Lower leg skin (tissue), 4 donors: ENCODE measurements at regions of chr17 and their contacts with region 1.

Region 1: DNA sequence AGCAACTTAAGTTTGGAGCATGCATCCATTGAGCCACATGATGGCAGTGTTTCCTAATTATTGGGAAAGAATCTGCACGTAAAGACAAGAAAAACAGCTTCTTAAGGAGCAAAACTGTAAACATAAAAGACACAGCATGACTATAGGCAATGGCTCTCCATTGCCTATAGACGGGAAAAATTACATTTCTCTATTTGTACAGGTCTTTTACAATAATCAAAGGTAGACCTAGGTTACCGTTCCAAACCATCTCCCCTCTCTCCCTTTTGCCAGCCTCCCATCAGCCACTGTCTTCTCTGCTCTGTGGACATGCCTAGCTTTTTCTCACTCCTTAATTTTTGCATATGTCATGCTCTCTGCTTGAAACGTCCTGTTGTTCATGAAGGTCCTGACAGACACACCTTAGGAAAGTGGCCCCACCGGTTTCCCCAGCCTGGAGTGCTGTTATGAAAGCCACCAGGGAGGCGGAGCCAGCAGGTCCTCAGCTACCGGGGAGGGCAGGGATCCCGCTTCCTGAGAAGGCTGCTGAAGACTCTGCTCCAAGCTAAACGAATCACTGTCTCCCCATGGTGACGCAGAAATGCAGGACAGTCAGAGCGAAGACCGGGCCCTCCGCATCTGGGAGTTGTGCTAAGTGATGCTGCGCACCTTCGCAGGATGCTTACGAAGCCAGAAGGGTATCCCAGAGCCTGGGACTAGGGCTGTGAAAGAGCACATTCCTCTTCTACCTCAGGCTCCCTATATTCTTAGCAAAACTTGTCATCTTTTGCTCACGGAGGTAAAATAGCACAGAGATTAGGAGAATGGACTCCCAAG is 2.2 kb upstream of the SLC16A11 start:
- DNase-seq: peak; percentile 86 to 94
- H3K4me3 ChIP-seq: no peak overlapping the region
- CTCF ChIP-seq: peak in 1 of 3 donors; percentile 40
- POLR2A ChIP-seq: no peak

Region 2: DNA sequence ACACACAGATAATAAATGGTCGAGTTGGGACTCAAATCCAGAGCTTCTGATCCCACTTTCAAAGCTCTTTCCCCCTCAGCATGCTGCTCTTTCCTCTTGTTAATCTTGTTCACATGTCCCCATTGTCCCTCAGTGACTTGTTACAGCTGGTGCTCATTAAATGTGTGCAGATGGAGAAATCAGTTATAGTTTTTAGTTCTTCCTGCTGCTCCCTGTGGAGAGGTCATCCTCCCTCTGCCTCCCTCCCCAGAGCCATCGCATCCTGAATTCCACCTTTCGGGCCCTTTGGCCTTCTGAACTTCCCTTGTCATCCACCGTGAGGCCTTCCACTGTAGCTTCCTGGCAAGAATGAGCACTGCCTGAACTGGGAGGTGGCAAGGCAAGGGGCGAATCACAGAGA is 796.4 kb before region 1 on chr17:
- intact Hi-C with region 1: no loop called
- DNase-seq: no peak
- H3K4me3 ChIP-seq: no peak overlapping the region
- CTCF ChIP-seq: no peak
- POLR2A ChIP-seq: no peak

Region 3: DNA sequence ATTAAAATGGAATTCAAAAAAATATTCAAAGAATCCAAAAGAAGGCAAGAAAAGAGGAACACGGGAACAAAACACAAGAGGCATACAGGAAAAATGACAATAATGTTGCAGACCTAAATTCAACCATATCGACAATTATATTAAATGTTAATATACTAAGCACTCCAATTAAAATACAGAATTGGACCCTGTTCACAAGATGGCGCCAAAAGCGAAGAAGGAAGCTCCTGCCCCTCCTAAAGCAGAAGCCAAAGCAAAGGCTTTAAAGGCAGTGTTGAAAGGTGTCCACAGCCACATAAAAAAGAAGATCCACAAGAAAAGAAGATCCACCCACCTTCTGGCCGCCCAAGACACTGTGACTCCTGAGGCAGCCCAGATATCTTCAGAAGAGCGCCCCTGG is 296.6 kb before region 1 on chr17:
- intact Hi-C with region 1: no loop called
- DNase-seq: no peak
- H3K4me3 ChIP-seq: no peak overlapping the region
- CTCF ChIP-seq: no peak
- POLR2A ChIP-seq: no peak

Region 4: DNA sequence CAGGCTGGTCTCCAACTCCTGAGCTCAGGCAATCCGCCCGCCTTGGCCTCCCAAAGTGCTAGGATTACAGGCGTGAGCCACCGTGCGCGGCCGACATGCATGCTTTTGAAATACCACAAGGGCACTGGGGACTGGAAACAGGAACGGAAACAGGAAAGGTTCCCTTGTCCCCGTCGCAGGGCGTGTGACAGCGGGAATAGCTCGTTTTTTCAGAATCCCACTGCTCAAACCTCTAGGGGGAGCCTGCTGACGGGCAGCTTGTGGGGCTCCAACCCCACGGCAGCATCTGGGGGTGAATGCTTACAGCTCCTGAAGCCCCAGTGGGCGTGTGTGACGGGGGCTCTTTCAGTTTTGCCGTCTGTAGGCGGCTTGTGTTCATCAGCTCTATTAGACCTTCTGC is 87.3 kb after region 1 on chr17:
- intact Hi-C with region 1: loop called (anchors 5 kb)
- DNase-seq: no peak
- H3K4me3 ChIP-seq: no peak overlapping the region
- CTCF ChIP-seq: no peak
- POLR2A ChIP-seq: no peak

Region 5: GRCh38 chr17:7176846-7177195 is 130.7 kb after region 1 on chr17:
- intact Hi-C with region 1: no loop called
- DNase-seq: no peak
- H3K4me3 ChIP-seq: no peak overlapping the region
- CTCF ChIP-seq: no peak
- POLR2A ChIP-seq: no peak